Posterior cingulate gyrus (tissue), 11 donors: ENCODE measurements at regions of chr3 and their contacts with region 1.

Region 1: DNA sequence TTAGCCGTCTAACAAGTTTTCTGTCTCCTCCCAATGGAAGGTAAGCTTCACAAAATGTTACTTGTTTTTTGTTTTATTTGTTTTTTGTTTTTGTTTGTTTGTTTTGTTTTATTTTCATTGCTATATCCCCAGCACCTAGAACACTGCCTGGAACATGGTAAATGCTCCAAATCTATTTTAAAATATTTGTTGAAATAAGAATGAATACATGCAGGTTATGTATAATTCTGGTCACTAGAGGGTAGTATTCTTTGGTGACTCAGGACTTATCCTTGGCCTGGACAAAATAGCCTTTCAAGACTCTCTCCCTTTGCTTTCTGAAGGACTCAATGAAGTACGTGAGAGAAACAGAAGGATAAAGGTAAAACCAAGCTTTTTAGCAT is 47.0 kb upstream of the PPP2R3A start:
- DNase-seq: no peak

Region 2: DNA sequence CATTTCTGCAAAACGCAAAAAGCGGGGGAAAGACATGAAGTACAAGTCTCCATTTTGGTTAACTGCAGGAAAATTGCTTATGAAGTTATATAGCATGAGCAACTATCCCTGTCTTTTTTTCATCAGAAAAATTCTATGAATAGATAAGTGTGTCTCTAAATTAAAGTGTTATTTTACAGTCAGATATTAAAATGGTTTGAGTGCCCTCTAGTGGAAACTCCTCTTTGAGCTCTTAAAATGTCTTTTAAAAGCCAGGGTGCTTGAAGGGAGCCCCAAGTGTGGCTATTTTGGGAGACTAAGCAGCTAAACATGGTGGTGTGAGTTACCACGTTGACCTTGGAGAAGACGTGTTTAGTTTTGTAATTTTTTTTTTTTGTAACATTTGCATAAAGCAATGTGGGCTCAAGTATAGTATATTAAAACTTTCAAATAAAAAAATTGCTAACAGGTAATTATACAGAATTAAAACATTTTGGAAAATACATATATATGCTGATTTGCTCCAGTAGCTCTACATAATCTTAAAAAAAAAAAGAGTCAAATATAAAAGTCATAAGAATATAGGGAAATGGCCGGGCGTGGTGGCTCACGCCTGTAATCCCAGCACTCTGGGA is 124.1 kb after region 1 on chr3:
- intact Hi-C with region 1: loop called (anchors 1 kb)
- DNase-seq: no peak